ENCODE measurements at regions of chr19 and their contacts with region 1.

Region 1: DNA sequence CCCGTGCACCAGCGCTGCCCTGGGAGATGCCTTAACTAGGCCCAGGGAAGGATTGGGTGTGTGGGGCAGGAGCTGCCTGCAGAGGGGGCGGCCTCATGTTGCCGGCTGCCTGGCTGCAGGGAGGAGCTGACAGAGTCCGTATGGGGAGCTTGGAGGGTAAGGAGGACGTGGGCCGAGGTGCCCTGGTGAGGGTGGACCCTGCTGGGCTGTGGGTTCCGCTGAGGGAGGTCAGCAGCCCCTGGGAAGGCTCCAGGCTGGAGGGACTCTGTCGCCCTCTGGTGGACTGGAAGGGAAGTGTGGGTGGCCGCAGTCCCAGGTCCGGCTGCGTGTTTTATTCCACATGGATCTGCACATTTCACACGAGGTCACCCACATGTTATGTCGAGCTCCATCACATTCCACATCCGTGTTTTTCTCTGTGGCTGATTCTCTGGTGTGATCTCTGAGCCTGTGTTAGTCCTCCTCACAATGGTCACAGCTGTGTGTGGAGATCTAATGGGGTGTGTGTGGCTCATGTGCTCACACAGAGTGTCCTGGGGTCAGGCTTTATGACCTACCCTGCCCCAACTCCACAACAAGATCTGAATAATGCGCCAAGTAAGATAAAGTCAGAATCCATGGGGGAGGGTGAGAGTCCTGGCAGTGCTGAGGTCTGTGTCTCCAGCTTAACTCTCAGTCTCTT is 1.8 kb upstream of the CEACAM8 start:
- DNase-seq: peak; percentile 44
- H3K4me3 Mint-ChIP-seq: no peak overlapping the region
- H3K27ac Mint-ChIP-seq: no peak overlapping the region
- H3K4me1 Mint-ChIP-seq: no peaks in the 10 kb centered on the region
- H3K27me3 Mint-ChIP-seq: peaks cover 4% of the 10 kb centered on the region

Region 2: DNA sequence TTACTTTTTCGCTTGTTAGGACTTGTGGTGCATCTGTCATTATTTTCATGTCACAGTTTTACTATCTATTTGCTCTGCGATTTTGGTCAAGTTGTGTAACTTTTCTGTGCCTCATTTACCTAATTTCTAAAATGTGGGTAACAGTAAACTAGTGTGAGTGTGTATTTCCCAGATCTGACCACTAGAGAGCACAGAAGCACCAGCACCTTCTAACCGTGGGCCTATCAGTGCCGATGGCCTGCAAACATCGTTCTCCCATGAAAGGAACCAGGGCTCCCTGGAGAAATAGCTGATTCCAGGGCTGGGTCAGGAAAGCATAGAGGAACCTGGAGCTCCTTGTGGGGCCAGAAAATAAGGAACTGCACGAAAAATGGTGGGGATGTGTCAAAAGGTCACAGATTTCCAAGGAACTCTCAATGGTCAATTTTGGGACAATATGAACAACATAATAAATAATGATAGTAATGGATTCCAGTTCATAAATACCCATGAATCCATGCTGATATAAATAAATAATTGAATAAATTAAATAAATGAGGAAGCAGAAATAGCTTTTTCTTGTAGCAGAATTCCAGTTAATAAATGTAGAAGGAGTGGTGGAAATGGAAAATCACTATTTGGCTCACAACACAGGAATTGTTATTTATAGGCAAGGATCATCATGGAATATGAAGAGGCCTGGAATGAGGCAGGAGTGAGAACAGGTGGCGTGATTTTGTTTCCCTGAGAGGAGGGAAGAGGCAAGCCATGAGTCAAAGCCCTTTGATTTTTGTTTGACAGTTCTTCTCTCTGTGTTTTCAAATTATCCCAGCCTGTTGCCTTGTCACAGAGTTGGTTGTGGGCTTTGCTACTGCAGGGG is 33.0 kb before region 1 on chr19:
- CTCF ChIA-PET with region 1: interaction called, 25 read pairs
- intact Hi-C with region 1: loop called (anchors 2 kb)
- DNase-seq: peak; percentile 34
- H3K4me3 Mint-ChIP-seq: no peak overlapping the region
- H3K27ac Mint-ChIP-seq: no peak overlapping the region
- H3K4me1 Mint-ChIP-seq: no peaks in the 10 kb centered on the region
- H3K27me3 Mint-ChIP-seq: peaks cover 5% of the 10 kb centered on the region

Region 3: GRCh38 chr19:42571116-42571515 is 25.4 kb before region 1 on chr19:
- CTCF ChIA-PET with region 1: interaction called, 21 read pairs
- intact Hi-C with region 1: loop called (anchors 2 kb)
- DNase-seq: no peak
- H3K4me3 Mint-ChIP-seq: no peak overlapping the region
- H3K27ac Mint-ChIP-seq: no peak overlapping the region
- H3K4me1 Mint-ChIP-seq: no peaks in the 10 kb centered on the region
- H3K27me3 Mint-ChIP-seq: no peaks in the 10 kb centered on the region

Measured in activated naive CD4-positive, alpha-beta T cell treated with anti-CD3 and anti-CD28 coated beads for 36 hours (primary cell).